ENCODE measurements at regions of chr20 and their contacts with region 1.

Region 1: GRCh38 chr20:33933469-33933909 is 60.2 kb upstream of the RALY start:
- DNase-seq: peak; percentile 91
- H3K4me3 ChIP-seq: no peak overlapping the region
- H3K27ac ChIP-seq: peak overlapping the region; percentile 24 to 69 (median 58)
- H3K4me1 ChIP-seq: peaks cover 0 to 10% (median 0%) of the 10 kb centered on the region in 4 donors
- H3K27me3 ChIP-seq: no peaks in the 10 kb centered on the region
- CTCF ChIP-seq: peak; percentile 51 to 68 (median 58)
- EP300 ChIP-seq: no peak
- POLR2A ChIP-seq: no peak

Region 2: DNA sequence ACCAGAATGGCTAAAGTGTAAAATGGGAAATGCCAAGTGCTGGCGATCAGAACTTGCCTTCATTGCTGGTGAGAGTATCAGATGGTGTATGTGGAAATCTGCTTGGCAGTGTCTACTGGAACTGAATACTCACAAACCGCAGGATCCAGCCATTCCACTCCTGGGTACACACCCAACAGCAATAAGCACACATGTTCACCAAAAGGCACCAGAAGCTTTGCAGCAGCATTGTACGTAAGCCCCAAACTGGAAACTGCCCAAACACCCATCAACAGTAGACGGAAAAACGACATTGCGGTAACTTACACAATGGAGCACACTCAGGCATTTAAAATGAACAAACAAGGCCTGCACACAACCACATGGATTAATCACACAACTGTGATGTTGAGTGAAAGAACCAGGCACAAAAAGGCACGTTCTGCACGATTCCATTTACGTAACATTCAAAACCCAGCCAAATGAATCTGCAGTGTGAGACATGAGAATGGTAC is 802.9 kb before region 1 on chr20:
- intact Hi-C with region 1: no loop called
- DNase-seq: no peak
- H3K4me3 ChIP-seq: no peak overlapping the region
- H3K27ac ChIP-seq: no peak overlapping the region
- H3K4me1 ChIP-seq: no peaks in the 10 kb centered on the region
- H3K27me3 ChIP-seq: peaks cover 0 to 7% (median 7%) of the 10 kb centered on the region in 3 donors
- CTCF ChIP-seq: no peak
- EP300 ChIP-seq: no peak
- POLR2A ChIP-seq: no peak

Region 3: DNA sequence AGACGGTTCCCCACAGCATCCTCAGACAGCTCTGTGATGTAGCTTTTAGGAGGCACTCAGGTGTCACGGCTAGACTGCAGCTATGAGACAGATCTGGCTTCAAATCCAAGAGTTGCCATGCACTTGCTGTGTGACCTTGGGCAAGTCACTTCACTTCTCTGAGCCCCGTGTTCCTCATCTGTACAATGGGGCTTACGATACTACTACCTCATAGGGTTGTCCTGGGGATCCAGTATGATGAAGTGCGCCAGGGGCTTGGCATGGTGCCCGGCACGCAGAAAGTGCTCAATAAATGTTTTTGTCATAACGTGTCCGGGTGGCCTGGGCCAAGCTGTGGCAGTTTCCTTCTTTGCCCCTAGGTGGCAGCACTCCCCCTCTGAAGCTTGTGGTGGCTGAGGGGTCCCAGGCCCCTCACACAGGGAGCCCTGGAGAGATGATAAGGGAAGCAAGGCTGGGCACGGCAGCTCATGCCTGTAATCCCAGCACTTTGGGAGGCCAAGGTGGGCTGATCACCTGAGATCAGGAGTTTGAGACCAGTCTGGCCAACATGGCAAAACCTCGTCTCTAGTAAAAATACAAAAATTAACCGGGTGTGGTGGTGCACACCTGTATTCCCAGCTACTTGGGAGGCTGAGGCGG is 141.4 kb before region 1 on chr20:
- intact Hi-C with region 1: no loop called
- DNase-seq: peak; percentile 82
- H3K4me3 ChIP-seq: no peak overlapping the region
- H3K27ac ChIP-seq: peak overlapping the region in 3 of 4 donors; percentile 88 to 89 (median 88)
- H3K4me1 ChIP-seq: peaks cover 0 to 63% (median 62%) of the 10 kb centered on the region in 4 donors
- H3K27me3 ChIP-seq: no peaks in the 10 kb centered on the region
- CTCF ChIP-seq: peak; percentile 57 to 81 (median 76)
- EP300 ChIP-seq: no peak
- POLR2A ChIP-seq: no peak

Region 4: DNA sequence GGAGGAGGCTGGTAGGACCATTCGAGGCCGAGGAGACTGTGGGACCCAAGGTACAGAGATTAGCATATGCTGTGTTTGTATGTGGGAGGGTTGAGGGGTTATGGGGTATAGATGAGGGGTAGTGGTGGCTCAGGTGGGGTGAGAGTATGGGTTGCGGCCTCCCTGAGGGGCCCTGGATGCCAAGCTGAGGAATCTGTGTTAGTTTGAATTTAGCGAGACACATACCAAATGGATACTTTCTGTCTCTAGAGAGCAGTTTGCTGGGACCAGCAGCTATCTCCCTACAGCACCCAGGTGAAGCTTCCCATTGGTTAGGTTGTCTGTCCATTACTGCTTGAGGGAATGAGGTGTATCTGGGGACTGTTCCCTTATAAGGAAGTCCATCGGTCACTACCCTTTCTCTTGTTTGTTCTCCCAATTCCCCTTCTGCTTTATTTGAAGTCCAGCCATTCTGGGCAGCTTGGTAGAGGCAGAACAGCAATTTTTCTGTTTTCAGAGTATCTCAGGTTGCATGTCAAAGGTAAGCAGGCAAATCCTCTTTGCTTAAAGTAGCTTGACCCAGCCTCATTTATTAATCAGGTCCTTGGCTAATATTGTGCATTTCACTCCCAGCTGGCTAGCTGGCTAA is 107.1 kb before region 1 on chr20:
- intact Hi-C with region 1: no loop called
- DNase-seq: no peak
- H3K4me3 ChIP-seq: no peak overlapping the region
- H3K27ac ChIP-seq: peak overlapping the region; percentile 36 to 79 (median 70)
- H3K4me1 ChIP-seq: peaks cover 0 to 70% (median 63%) of the 10 kb centered on the region in 4 donors
- H3K27me3 ChIP-seq: no peaks in the 10 kb centered on the region
- CTCF ChIP-seq: no peak
- EP300 ChIP-seq: no peak
- POLR2A ChIP-seq: no peak

Region 5: DNA sequence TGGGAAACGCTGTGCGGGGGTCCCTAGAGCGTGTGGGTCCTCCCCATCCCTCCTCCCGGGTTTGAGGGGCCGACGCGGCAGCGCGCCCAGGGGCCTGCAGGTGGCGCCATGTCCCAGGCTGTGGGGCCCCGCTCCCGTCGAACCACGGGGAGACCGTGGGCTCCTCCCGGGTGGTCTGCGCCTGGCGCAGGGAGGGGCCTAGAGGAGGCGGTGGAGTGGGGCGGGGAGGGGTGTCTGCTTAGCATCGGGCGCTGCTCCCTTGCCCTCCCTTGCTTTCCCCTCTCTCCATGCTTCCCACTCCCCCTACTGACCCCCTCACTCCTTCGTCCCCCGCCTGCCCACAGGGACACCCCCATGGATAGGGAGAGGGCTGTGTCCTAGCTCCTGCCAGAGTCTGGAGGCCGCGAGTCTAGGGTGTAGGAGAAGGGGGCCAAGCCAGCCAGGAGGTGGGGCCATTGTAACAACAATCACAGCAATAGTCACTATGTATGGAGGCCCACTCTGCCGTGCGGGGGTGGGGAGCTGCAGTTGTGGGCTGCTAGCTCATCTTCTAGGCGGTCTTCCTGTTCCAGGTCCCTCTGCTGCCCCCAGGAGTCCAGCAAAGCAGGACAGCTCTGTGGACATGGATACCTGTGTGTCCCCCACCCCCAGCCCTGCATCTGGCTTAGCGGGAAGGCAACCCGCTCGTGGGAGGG is 70.6 kb before region 1 on chr20:
- intact Hi-C with region 1: loop called (anchors 5 kb)
- DNase-seq: peak; percentile 77
- H3K4me3 ChIP-seq: peak overlapping the region in 3 of 4 donors; percentile 14 to 28 (median 25)
- H3K27ac ChIP-seq: no peak overlapping the region
- H3K4me1 ChIP-seq: peaks cover 0 to 29% (median 20%) of the 10 kb centered on the region in 4 donors
- H3K27me3 ChIP-seq: no peaks in the 10 kb centered on the region
- CTCF ChIP-seq: peak; percentile 21 to 67 (median 62)
- EP300 ChIP-seq: no peak
- POLR2A ChIP-seq: no peak

Region 6: GRCh38 chr20:34037121-34037520 is 103.6 kb after region 1 on chr20:
- intact Hi-C with region 1: no loop called
- DNase-seq: no peak
- H3K4me3 ChIP-seq: no peak overlapping the region
- H3K27ac ChIP-seq: no peak overlapping the region
- H3K4me1 ChIP-seq: peaks cover 0 to 43% (median 36%) of the 10 kb centered on the region in 4 donors
- H3K27me3 ChIP-seq: no peaks in the 10 kb centered on the region
- CTCF ChIP-seq: no peak
- EP300 ChIP-seq: no peak
- POLR2A ChIP-seq: no peak